GM23248 (cell line): ENCODE measurements at regions of chr4 and their contacts with region 1.

Region 1: GRCh38 chr4:74311696-74312313 is 3.5 kb downstream of the EPGN start:
- DNase-seq: peak; percentile 76
- H3K4me3 ChIP-seq: no peak overlapping the region
- H3K27ac ChIP-seq: no peak overlapping the region
- H3K4me1 ChIP-seq: peaks cover 7% of the 10 kb centered on the region
- H3K27me3 ChIP-seq: no peaks in the 10 kb centered on the region

Region 2: DNA sequence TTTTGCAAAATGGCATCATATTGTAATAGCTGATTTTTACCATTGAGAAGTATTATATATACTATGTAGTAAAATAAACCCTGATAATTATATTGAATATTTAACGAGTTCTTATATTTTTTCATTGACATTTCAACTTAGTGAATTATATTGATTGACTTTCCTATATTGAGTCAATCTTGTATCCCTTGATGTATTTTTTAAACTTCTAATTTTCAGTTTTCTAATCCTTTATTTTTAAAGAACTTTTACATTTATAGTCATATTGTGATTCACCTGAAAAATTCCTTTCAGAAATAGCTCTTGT is 388.2 kb before region 1 on chr4:
- in situ Hi-C with region 1: no loop called
- DNase-seq: no peak
- H3K4me3 ChIP-seq: no peak overlapping the region
- H3K27ac ChIP-seq: no peak overlapping the region
- H3K4me1 ChIP-seq: peaks cover 11% of the 10 kb centered on the region
- H3K27me3 ChIP-seq: no peaks in the 10 kb centered on the region

Region 3: DNA sequence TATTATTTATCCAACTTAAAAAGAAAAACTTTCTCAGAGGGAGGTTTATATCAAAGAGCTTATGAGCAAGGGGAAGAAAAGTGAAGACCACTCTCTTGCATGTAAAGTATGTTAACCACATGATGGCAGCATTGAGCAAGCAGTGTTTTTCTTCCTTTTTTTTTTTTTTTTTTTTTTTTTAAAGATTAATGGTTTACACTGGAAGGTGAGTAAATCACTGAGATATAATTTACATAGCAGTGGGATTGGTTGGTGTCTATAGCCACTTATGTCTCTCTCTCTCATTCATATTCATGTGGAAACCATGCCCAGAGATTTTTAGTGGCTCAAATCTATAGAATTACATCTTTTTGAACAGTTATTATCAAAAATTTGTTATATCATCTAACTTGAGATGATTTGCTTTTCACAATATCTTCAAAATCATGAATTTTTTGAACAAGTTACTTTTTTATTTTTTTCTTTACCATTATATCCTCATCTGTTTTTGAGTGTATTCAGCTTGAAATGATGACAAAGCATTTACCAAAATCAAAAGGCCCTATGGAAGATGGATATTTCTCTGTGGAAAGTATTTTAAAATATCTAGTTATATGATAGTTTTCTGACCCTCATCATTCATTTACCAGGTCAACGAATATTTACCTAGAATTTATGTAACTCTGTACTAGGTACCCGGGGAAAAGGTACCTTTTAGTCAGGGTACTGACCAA is 122.3 kb before region 1 on chr4:
- in situ Hi-C with region 1: loop called (anchors 5 kb)
- DNase-seq: peak; percentile 71
- H3K4me3 ChIP-seq: no peak overlapping the region
- H3K27ac ChIP-seq: no peak overlapping the region
- H3K4me1 ChIP-seq: no peaks in the 10 kb centered on the region
- H3K27me3 ChIP-seq: no peaks in the 10 kb centered on the region

Region 4: DNA sequence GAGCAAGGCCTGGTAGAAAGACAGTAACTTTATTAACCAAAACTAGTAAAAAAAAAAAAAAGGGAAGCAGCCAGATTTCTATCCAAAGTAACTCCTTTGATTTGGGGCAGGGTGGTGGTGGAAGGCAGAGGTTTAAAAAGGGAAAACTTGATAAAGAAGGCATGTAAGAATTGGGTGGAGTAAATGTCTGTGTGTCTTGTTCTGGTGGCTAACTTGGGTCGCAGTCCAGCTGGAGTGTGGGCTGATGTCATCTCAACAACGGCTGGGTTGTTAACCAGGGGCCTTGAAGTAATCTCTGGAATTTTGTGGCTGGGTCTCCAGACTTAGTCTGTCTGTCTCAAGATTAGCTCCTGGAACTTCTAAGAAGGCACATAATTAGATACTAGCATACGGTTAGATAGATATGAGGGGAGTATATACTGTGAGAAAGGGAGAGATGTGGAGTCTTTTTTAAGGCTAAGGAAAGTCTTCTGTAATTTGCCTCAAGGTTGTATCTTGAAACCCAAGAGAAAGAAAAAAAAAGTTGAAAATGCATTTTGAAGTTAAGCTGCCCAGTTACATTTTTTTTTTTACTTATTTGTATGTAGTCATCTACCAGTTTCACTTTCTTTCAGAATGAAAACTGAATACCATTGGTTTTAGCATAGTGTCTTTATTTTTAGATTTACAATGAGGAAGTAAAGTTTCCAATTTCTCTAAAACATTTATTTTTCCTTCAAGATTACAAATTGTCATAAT is 105.5 kb before region 1 on chr4:
- in situ Hi-C with region 1: no loop called
- DNase-seq: peak; percentile 45
- H3K4me3 ChIP-seq: peak overlapping the region; percentile 8
- H3K27ac ChIP-seq: peak overlapping the region; percentile 62
- H3K4me1 ChIP-seq: peaks cover 32% of the 10 kb centered on the region
- H3K27me3 ChIP-seq: no peaks in the 10 kb centered on the region